Posterior cingulate gyrus (tissue), 11 donors: ENCODE measurements at regions of chr12 and their contacts with region 1.

Region 1: GRCh38 chr12:52036587-52037171 is 14.6 kb upstream of the NR4A1 start:
- DNase-seq: peak; percentile 72 to 97 (median 81)

Region 2: DNA sequence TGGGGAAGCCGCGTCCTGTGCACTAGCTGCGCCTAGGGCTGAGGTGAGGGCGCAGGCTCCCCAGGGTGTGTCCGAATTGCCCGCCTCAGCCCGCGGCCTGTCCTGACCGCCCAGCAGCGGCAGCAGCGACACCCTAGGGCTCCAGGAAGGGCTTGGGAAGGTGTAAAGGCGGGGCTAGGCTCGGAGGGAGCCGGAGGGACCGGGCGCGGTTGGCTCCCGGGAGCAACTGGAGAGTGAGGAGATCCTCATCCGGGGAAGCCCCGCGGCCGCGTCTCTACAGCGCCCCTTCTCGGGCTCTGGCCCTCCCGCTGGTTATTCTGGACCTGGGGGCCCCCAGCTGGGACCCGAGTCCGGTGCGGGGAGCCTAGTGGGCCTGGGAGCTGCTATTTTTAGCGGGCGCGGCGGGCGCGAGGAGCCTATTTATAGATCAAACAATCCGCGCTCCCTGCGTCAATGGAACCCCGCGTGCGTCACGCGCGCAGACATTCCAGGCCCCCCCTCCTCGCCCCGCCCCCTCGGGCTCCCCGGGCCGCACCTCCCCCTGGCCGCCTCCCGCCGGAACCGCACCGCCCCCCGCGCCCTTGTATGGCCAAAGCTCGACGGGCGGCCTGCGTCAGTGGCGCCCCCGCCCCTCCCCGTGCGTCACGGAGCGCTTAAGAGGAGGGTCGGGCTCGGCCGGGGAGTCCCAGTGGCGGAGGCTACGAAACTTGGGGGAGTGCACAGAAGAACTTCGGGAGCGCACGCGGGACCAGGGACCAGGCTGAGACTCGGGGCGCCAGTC is 14.3 kb after region 1 on chr12 and contains the start of gene NR4A1:
- intact Hi-C with region 1: loop called (anchors 1 kb)
- DNase-seq: peak; percentile 87 to 99 (median 93)

Region 3: GRCh38 chr12:53727310-53728041 is 1690.8 kb after region 1 on chr12 and contains the start of gene CALCOCO1:
- intact Hi-C with region 1: no loop called
- DNase-seq: peak; percentile 96 to 100 (median 98)